Endothelial cell of umbilical vein (primary cell): ENCODE measurements at regions of chr2 and their contacts with region 1.

Region 1: DNA sequence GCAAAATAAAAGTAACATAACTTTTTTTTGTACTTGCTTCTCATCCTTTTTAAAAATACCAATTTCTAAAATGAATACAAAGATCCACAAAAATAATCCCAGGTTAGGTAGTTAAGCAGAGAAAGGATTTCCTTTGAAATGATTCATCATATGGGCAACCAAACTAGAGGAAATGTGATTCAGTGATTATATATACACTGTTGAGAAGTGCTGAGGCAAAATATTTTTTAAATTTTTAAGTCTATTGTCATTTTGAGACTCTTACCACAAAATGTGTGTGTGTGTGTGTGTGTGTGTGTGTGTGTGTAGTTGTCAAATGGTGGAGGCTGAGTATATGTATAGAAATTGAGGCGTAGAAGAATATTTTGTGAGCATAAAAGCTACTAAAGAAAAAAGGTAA is 1075.3 kb downstream of the LRP1B start:
- DNase-seq: peak; percentile 77
- H3K4me3 ChIP-seq: no peak overlapping the region
- H3K27ac ChIP-seq: peak overlapping the region; percentile 43
- H3K4me1 ChIP-seq: peaks cover 13% of the 10 kb centered on the region
- H3K27me3 ChIP-seq: no peaks in the 10 kb centered on the region
- CTCF ChIP-seq: no peak
- POLR2A ChIP-seq: no peak

Region 2: DNA sequence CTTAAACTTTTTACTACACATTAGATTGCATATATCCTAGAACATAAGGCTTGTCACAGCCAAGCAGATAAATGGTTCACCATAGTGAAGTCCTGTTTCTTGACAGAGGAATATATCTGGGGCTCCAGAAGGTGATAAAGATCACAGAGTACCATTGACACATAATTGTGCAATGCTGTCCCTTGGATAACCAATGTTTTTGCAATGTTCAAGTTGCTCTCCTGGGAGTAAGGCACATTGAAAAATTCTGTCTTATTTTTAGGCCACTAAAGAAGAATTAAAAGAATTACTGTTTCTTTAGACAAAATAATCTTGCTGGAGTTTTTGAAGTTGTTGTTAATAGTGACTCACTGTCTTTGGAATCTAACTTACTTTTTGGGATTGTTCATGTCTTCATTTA is 57.5 kb before region 1 on chr2:
- CTCF ChIA-PET with region 1: no interaction called
- POLR2A ChIA-PET with region 1: no interaction called
- dilution Hi-C with region 1: no loop called
- intact Hi-C with region 1: no loop called
- DNase-seq: no peak
- H3K4me3 ChIP-seq: no peak overlapping the region
- H3K27ac ChIP-seq: no peak overlapping the region
- H3K4me1 ChIP-seq: no peaks in the 10 kb centered on the region
- H3K27me3 ChIP-seq: no peaks in the 10 kb centered on the region
- CTCF ChIP-seq: no peak
- POLR2A ChIP-seq: no peak

Region 3: DNA sequence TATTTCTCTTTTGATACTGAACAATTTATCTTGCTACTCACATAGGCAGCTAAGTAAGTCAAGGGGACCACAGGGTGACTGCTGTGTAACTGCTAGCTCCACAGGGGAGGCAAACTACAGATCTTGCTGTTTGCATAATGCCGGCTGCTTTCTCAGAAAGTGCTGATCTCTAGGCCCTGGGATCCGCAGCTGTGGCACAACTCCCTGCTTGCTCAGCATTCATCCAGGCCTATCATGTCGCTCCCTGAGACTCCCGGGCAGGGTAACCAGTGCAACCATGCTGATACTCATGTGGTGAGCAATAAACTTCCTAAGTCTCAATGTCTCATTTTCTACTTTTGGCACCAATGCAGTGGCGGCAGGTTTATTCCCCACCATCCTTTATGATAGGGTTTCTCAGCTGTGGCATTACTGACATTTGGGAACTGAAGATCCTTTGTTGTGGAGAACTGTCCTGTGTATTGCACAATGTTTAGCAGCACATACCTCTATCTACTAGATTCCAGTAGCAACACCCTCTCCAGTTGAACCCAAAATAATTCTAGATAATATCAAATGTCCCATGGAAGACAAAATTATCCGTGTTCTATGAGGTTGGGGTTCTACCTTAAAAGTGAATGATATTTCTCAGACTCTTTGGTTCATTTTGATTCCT is 26.0 kb before region 1 on chr2:
- CTCF ChIA-PET with region 1: no interaction called
- POLR2A ChIA-PET with region 1: no interaction called
- dilution Hi-C with region 1: no loop called
- intact Hi-C with region 1: no loop called
- DNase-seq: no peak
- H3K4me3 ChIP-seq: no peak overlapping the region
- H3K27ac ChIP-seq: no peak overlapping the region
- H3K4me1 ChIP-seq: peaks cover 8% of the 10 kb centered on the region
- H3K27me3 ChIP-seq: no peaks in the 10 kb centered on the region
- CTCF ChIP-seq: no peak
- POLR2A ChIP-seq: no peak

Region 4: GRCh38 chr2:141041281-141041680 is 14.2 kb before region 1 on chr2:
- CTCF ChIA-PET with region 1: interaction called, 3 read pairs
- POLR2A ChIA-PET with region 1: no interaction called
- dilution Hi-C with region 1: no loop called
- intact Hi-C with region 1: loop called (anchors 2 kb)
- DNase-seq: peak; percentile 78
- H3K4me3 ChIP-seq: no peak overlapping the region
- H3K27ac ChIP-seq: peak overlapping the region; percentile 14
- H3K4me1 ChIP-seq: peaks cover 12% of the 10 kb centered on the region
- H3K27me3 ChIP-seq: no peaks in the 10 kb centered on the region
- CTCF ChIP-seq: no peak
- POLR2A ChIP-seq: no peak

Region 5: GRCh38 chr2:141068053-141068682 is 12.6 kb after region 1 on chr2:
- CTCF ChIA-PET with region 1: no interaction called
- POLR2A ChIA-PET with region 1: no interaction called
- dilution Hi-C with region 1: no loop called
- intact Hi-C with region 1: no loop called
- DNase-seq: no peak
- H3K4me3 ChIP-seq: no peak overlapping the region
- H3K27ac ChIP-seq: no peak overlapping the region
- H3K4me1 ChIP-seq: no peaks in the 10 kb centered on the region
- H3K27me3 ChIP-seq: no peaks in the 10 kb centered on the region
- CTCF ChIP-seq: no peak
- POLR2A ChIP-seq: no peak

Region 6: DNA sequence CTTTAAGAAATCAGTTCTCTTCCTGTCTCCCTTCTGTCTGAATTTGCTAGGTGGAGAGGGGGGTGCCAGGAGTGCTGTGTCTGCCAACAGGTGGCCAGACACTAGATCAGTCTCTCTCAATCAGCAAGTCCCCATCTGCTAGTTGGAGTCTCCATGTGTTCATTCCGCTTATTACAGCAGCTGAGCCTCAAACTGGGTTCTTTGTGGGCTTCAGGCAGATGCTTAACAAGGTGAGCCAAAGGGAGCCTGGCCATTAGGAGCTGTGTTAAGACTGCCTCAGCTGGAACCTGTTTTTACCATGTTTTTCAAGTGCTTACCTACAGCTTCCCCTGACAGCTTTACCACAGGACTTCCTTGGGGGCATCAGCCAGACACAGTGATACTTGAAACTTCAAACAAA is 673.4 kb after region 1 on chr2:
- CTCF ChIA-PET with region 1: no interaction called
- POLR2A ChIA-PET with region 1: no interaction called
- dilution Hi-C with region 1: no loop called
- intact Hi-C with region 1: no loop called
- DNase-seq: no peak
- H3K4me3 ChIP-seq: no peak overlapping the region
- H3K27ac ChIP-seq: no peak overlapping the region
- H3K4me1 ChIP-seq: no peaks in the 10 kb centered on the region
- H3K27me3 ChIP-seq: no peaks in the 10 kb centered on the region
- CTCF ChIP-seq: no peak
- POLR2A ChIP-seq: no peak

Region 7: GRCh38 chr2:142180820-142181535 is 1125.4 kb after region 1 on chr2:
- CTCF ChIA-PET with region 1: no interaction called
- POLR2A ChIA-PET with region 1: no interaction called
- dilution Hi-C with region 1: no loop called
- intact Hi-C with region 1: loop called (anchors 1 kb)
- DNase-seq: peak; percentile 58
- H3K4me3 ChIP-seq: no peak overlapping the region
- H3K27ac ChIP-seq: no peak overlapping the region
- H3K4me1 ChIP-seq: peaks cover 10% of the 10 kb centered on the region
- H3K27me3 ChIP-seq: no peaks in the 10 kb centered on the region
- CTCF ChIP-seq: peak; percentile 66 to 71
- POLR2A ChIP-seq: no peak